Activated naive CD4-positive, alpha-beta T cell treated with anti-CD3 and anti-CD28 coated beads for 36 hours (primary cell): ENCODE measurements at regions of chr7 and their contacts with region 1.

Region 1: GRCh38 chr7:24907311-24907886 is 72.6 kb downstream of the OSBPL3 start:
- DNase-seq: peak; percentile 48
- H3K4me3 Mint-ChIP-seq: no peak overlapping the region
- H3K27ac Mint-ChIP-seq: no peak overlapping the region
- H3K4me1 Mint-ChIP-seq: peaks cover 34% of the 10 kb centered on the region
- H3K27me3 Mint-ChIP-seq: no peaks in the 10 kb centered on the region

Region 2: GRCh38 chr7:23531794-23532489 is 1375.5 kb before region 1 on chr7 and contains the start of gene TRA2A:
- CTCF ChIA-PET with region 1: no interaction called
- intact Hi-C with region 1: loop called (anchors 10 kb)
- DNase-seq: peak; percentile 99
- H3K4me3 Mint-ChIP-seq: peak within 1 kb of the TSS; percentile 99
- H3K27ac Mint-ChIP-seq: peak within 1 kb of the TSS; percentile 100
- H3K4me1 Mint-ChIP-seq: peaks cover 43% of the 10 kb centered on the region
- H3K27me3 Mint-ChIP-seq: no peaks in the 10 kb centered on the region
- total RNA-seq, gene TRA2A: 77.8 to 79.0 TPM

Region 3: GRCh38 chr7:24866004-24866615 is 41.3 kb before region 1 on chr7:
- CTCF ChIA-PET with region 1: no interaction called
- intact Hi-C with region 1: loop called (anchors 1 kb)
- DNase-seq: peak; percentile 59
- H3K4me3 Mint-ChIP-seq: no peak overlapping the region
- H3K27ac Mint-ChIP-seq: peak overlapping the region; percentile 47
- H3K4me1 Mint-ChIP-seq: peaks cover 21% of the 10 kb centered on the region
- H3K27me3 Mint-ChIP-seq: no peaks in the 10 kb centered on the region

Region 4: DNA sequence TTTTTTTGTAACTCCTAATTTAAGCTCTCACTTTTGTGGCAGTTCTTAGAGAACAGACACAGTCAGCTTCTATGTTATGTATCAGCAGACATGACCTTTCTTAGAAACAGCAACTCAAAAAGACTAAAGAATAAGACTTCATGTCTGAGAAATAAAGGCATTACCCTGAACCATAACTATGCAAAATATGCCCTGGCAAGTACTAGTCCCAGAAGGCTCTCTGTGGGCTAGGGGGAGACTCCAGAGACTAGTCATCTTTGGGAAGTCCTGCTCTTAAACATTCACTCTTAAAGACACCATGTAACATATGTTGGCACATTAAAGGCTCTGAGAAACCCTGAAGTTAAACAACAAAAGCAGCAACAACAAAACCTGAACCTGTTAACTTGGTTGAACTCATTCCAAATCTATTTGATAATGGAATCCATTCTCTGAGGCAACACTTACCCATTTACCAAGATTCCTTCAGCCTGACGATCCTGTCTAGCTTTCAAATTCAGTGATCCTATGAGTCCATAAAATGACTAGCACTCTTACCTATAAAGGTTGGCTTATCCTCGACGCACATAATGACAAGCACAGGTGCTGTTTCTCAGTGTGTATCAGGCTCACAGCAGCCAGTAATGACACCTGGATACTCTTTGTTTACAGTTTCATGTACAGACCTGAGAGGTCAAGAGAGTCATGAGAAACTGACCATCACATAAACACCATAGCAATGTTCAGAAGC is 10.3 kb after region 1 on chr7:
- CTCF ChIA-PET with region 1: interaction called, 3 read pairs
- intact Hi-C with region 1: loop called (anchors 1 kb)
- DNase-seq: no peak
- H3K4me3 Mint-ChIP-seq: no peak overlapping the region
- H3K27ac Mint-ChIP-seq: peak overlapping the region; percentile 37
- H3K4me1 Mint-ChIP-seq: peaks cover 94% of the 10 kb centered on the region
- H3K27me3 Mint-ChIP-seq: no peaks in the 10 kb centered on the region

Region 5: DNA sequence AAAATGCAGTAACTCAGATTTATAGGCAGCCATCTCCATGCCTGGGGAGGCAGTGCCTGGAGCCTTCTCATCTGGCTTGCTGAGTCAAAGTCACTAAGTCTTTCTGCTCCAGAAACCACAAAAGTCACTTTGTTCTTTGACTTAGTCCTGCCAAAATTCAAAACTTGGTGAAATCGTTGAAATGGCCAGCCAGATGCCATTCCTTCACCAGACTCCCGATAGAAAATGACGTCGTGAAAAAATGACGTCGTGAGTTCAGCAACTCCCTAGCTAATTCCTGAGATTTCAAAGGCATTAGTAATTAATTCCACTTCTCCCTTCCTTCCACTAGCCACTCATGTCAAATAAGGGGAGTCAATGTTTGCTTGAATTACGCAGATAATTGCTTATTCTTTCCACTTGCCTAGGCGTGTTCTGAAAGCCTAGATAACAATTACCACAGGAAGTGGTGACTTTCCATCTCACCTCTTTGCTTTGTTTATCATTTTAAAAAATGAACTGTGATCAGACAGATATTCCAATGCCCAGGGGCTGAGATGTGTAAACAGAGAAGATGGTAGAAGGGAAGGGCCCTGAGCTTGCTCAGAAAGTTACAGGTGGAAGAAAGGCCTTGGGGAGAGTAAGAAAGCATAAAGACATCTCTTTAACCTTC is 121.1 kb after region 1 on chr7:
- CTCF ChIA-PET with region 1: interaction called, 5 read pairs
- intact Hi-C with region 1: loop called (anchors 1 kb)
- DNase-seq: peak; percentile 38
- H3K4me3 Mint-ChIP-seq: no peak overlapping the region
- H3K27ac Mint-ChIP-seq: peak overlapping the region; percentile 79
- H3K4me1 Mint-ChIP-seq: peaks cover 37% of the 10 kb centered on the region
- H3K27me3 Mint-ChIP-seq: no peaks in the 10 kb centered on the region

Region 6: DNA sequence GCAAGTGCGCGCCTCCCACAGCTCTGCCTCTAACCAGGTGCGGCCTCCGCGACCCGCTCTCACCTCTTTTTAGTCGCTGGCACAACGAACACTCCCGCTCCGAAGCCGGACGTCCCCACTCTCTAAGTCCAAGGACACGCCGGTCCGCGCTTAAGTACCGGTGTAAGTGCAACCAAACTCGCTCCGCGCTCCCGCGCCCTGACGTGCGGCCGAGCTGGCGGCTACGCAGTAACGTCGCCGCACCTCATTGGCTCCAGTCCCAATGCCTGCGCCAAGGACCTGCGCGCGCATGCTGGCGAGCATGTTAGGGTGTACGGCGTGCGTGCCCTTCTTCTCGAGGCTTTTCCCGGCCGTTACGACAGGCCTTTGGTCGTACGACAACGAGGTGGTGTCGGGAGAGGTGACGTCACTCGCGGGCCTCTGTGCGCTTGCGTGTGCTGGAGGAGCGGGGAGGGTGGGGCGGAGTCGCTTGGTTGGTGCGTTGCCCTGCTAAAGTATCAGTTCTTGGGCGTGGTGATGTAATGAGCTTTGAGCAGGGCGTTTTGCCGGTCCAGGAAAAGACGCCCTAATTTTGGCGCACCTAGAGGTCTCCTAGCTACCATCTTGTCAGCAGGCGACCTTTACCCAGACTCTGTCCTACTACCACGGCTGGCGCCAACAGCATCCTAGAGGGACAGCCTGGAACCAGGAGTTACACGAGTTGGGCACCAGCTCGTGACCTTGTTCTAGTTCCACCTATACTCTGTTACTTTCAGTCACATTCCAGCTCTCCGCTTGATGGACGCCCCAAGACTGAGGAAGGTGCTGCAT is 217.9 kb after region 1 on chr7 and contains the start of gene CYCS:
- CTCF ChIA-PET with region 1: no interaction called
- intact Hi-C with region 1: loop called (anchors 1 kb)
- DNase-seq: peak; percentile 100
- H3K4me3 Mint-ChIP-seq: peak within 1 kb of the TSS; percentile 93
- H3K27ac Mint-ChIP-seq: peak within 1 kb of the TSS; percentile 98
- H3K4me1 Mint-ChIP-seq: peaks cover 31% of the 10 kb centered on the region
- H3K27me3 Mint-ChIP-seq: no peaks in the 10 kb centered on the region
- total RNA-seq, gene CYCS: 213 to 224 TPM